Activated CD4-positive, alpha-beta T cell treated with anti-CD3 and anti-CD28 coated beads, Interleukin-2, amount 10 ng/mL, durations not matched to agents 7 days and 5 days (primary cell): ENCODE measurements at regions of chr19 and their contacts with region 1.

Region 1: DNA sequence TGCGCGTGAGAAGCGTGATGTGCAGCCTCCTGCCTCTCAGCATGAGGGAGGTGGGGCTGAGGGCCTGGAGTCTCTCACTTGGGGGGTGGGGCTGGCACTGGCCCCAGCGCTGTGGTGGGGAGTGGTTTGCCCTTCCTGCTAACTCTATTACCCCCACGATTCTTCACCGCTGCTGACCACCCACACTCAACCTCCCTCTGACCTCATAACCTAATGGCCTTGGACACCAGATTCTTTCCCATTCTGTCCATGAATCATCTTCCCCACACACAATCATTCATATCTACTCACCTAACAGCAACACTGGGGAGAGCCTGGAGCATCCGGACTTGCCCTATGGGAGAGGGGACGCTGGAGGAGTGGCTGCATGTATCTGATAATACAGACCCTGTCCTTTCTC is 8.7 kb downstream of the CD177 start:
- DNase-seq: no peak
- H3K4me3 Mint-ChIP-seq: no peak overlapping the region
- H3K27ac Mint-ChIP-seq: no peak overlapping the region
- H3K4me1 Mint-ChIP-seq: no peaks in the 10 kb centered on the region
- H3K27me3 Mint-ChIP-seq: no peaks in the 10 kb centered on the region

Region 2: GRCh38 chr19:43148233-43148632 is 213.9 kb before region 1 on chr19:
- CTCF ChIA-PET with region 1: no interaction called
- POLR2A ChIA-PET with region 1: interaction called, 12 read pairs
- DNase-seq: no peak
- H3K4me3 Mint-ChIP-seq: no peak overlapping the region
- H3K27ac Mint-ChIP-seq: no peak overlapping the region
- H3K4me1 Mint-ChIP-seq: no peaks in the 10 kb centered on the region
- H3K27me3 Mint-ChIP-seq: no peaks in the 10 kb centered on the region

Region 3: GRCh38 chr19:43290568-43291359 is 71.4 kb before region 1 on chr19:
- CTCF ChIA-PET with region 1: no interaction called
- POLR2A ChIA-PET with region 1: no interaction called
- DNase-seq: no peak
- H3K4me3 Mint-ChIP-seq: no peak overlapping the region
- H3K27ac Mint-ChIP-seq: no peak overlapping the region
- H3K4me1 Mint-ChIP-seq: no peaks in the 10 kb centered on the region
- H3K27me3 Mint-ChIP-seq: no peaks in the 10 kb centered on the region

Region 4: GRCh38 chr19:43337737-43338136 is 24.4 kb before region 1 on chr19:
- CTCF ChIA-PET with region 1: no interaction called
- POLR2A ChIA-PET with region 1: no interaction called
- DNase-seq: no peak
- H3K4me3 Mint-ChIP-seq: no peak overlapping the region
- H3K27ac Mint-ChIP-seq: no peak overlapping the region
- H3K4me1 Mint-ChIP-seq: no peaks in the 10 kb centered on the region
- H3K27me3 Mint-ChIP-seq: peaks cover 3% of the 10 kb centered on the region